Gastrocnemius medialis (tissue), 4 donors: ENCODE measurements at regions of chr7 and their contacts with region 1.

Region 1: DNA sequence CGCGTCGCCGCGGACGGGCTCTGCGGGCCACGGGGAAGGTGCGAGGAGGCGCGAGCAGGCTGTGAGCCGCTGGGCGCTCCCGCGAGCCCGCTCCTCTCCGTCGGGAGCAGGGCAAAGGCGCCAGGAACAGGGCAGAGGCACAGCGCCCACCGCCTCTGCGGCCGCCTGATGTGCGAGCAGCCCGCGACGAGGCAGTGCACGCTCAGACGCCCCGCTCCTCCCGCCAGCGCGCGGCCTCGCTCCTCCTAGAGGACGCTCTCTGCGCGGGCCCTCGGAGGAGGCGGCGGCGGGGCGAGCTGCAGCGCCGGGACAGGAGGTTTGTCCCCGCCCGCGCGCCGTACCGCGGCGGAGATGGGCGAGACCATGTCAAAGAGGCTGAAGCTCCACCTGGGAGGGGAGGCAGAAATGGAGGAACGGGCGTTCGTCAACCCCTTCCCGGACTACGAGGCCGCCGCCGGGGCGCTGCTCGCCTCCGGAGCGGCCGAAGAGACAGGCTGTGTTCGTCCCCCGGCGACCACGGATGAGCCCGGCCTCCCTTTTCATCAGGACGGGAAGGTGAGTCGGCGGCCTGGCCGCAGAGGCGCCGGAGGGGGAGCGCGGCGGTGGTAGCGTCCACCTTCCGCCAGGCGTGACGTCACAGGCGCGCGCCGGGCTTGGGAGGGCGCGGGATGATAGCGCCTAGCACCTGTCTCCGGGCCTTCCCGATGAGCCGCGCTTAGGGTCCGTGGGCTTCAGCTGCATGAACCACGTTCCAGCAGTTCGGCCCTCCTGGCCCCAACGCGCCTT is 731 bp downstream of the LANCL2 start:
- DNase-seq: peak; percentile 87 to 93
- ATAC-seq: peak; percentile 94 to 96
- H3K4me3 ChIP-seq: peak overlapping the region; percentile 86 to 99 (median 91)
- H3K27ac ChIP-seq: peak overlapping the region; percentile 97 to 99 (median 98)
- H3K4me1 ChIP-seq: peaks cover 11 to 23% of the 10 kb centered on the region in 2 donors
- H3K27me3 ChIP-seq: no peaks in the 10 kb centered on the region
- CTCF ChIP-seq: peak in 3 of 5 experiments; percentile 23 to 54 (median 37)
- POLR2A ChIP-seq: peak; percentile 66 to 71

Region 2: GRCh38 chr7:55140221-55140940 is 225.5 kb before region 1 on chr7:
- in situ Hi-C with region 1: no loop called
- intact Hi-C with region 1: loop called (anchors 2 kb)
- DNase-seq: peak; percentile 44 to 60
- ATAC-seq: peak; percentile 70 to 73
- H3K4me3 ChIP-seq: no peak overlapping the region
- H3K27ac ChIP-seq: peak overlapping the region; percentile 9 to 47 (median 44)
- H3K4me1 ChIP-seq: peaks cover 6 to 11% of the 10 kb centered on the region in 2 donors
- H3K27me3 ChIP-seq: no peaks in the 10 kb centered on the region
- CTCF ChIP-seq: no peak
- POLR2A ChIP-seq: no peak

Region 3: DNA sequence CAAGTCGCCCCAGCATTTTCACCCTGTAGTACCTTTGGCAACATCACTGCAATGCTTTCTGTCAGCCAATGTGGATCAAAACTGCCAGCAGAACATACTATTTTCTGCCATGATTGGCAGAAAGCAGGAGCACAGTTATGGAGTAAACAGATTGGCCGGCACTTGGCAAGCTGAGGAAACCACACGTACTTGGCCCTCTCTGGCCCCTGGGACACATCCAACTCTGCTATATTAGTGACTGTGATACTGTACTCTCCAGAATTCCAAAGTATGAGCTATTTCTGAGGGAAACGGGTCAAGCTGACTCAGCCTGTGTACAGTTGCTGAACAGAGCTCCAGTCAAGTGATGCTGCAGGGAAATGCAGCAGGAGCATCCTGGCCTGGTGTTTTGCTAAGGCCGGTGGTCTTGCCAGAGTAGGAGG is 40.5 kb before region 1 on chr7:
- in situ Hi-C with region 1: no loop called
- intact Hi-C with region 1: loop called (anchors 2 kb)
- DNase-seq: peak; percentile 63 to 83
- ATAC-seq: peak; percentile 94 to 99
- H3K4me3 ChIP-seq: no peak overlapping the region
- H3K27ac ChIP-seq: peak overlapping the region in 2 of 4 donors; percentile 12 to 75
- H3K4me1 ChIP-seq: peaks cover 16 to 17% of the 10 kb centered on the region in 2 donors
- H3K27me3 ChIP-seq: no peaks in the 10 kb centered on the region
- CTCF ChIP-seq: no peak
- POLR2A ChIP-seq: no peak

Region 4: GRCh38 chr7:55572378-55573233 is 206.7 kb after region 1 on chr7 and contains the start of gene VOPP1:
- in situ Hi-C with region 1: no loop called
- intact Hi-C with region 1: loop called (anchors 10 kb)
- DNase-seq: peak in 1 of 2 donors; percentile 58
- ATAC-seq: peak; percentile 69 to 75
- H3K4me3 ChIP-seq: peak within 1 kb of the TSS; percentile 83 to 97 (median 91)
- H3K27ac ChIP-seq: peak within 1 kb of the TSS; percentile 91 to 96 (median 94)
- H3K4me1 ChIP-seq: peaks cover 38 to 56% of the 10 kb centered on the region in 2 donors
- H3K27me3 ChIP-seq: no peaks in the 10 kb centered on the region
- CTCF ChIP-seq: no peak
- POLR2A ChIP-seq: peak in 1 of 2 donors; percentile 25
- total RNA-seq, gene VOPP1: 17.3 to 27.9 (median 26.5) TPM

Region 5: GRCh38 chr7:56063882-56064625 is 698.2 kb after region 1 on chr7 and contains the start of gene SUMF2:
- in situ Hi-C with region 1: loop called in 1 of 4 experiments (anchors 25 kb)
- intact Hi-C with region 1: no loop called
- DNase-seq: peak; percentile 86 to 91
- ATAC-seq: peak; percentile 95
- H3K4me3 ChIP-seq: peak within 1 kb of the TSS; percentile 68 to 94 (median 91)
- H3K27ac ChIP-seq: peak within 1 kb of the TSS; percentile 87 to 97 (median 95)
- H3K4me1 ChIP-seq: peaks cover 6 to 13% of the 10 kb centered on the region in 2 donors
- H3K27me3 ChIP-seq: no peaks in the 10 kb centered on the region
- CTCF ChIP-seq: peak in 3 of 5 experiments; percentile 15 to 41 (median 31)
- POLR2A ChIP-seq: peak; percentile 89 to 91
- total RNA-seq, gene SUMF2: 29.8 to 32.0 (median 31.1) TPM